CD4-positive, alpha-beta memory T cell (primary cell): ENCODE measurements at regions of chr7 and their contacts with region 1.

Region 1: DNA sequence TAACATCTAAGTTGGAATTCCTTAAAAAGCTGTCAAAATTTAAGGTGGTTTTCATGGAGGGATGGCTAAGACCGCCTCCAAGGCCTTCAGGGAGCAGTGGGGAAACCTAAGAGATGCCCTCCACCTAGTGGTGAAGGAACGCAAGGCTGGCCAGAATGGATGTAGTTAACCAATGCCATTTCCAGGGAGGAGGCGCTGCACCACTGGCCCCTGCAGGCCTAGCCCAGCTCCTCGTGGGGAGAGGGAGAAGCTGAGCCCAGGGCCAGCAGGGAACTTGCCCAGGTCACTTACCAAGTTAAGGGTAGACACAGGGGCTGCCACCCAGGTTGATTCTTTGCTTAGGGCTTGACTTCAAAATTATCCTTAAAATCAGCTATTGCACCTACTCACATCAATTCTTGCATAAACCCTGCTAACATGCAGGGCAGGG is 32.0 kb downstream of the FIGNL1 start:
- DNase-seq: peak; percentile 59 to 71 (median 63)
- H3K4me3 ChIP-seq: no peak overlapping the region
- H3K4me3 Mint-ChIP-seq: no peak overlapping the region
- H3K27ac ChIP-seq: no peak overlapping the region
- H3K27ac Mint-ChIP-seq: peak overlapping the region in 1 of 7 donors; percentile 62
- H3K4me1 ChIP-seq: peaks cover 16% of the 10 kb centered on the region
- H3K4me1 Mint-ChIP-seq: peaks cover 12 to 23% (median 16%) of the 10 kb centered on the region in 4 donors
- H3K27me3 ChIP-seq: no peaks in the 10 kb centered on the region
- H3K27me3 Mint-ChIP-seq: no peaks in the 10 kb centered on the region

Region 2: DNA sequence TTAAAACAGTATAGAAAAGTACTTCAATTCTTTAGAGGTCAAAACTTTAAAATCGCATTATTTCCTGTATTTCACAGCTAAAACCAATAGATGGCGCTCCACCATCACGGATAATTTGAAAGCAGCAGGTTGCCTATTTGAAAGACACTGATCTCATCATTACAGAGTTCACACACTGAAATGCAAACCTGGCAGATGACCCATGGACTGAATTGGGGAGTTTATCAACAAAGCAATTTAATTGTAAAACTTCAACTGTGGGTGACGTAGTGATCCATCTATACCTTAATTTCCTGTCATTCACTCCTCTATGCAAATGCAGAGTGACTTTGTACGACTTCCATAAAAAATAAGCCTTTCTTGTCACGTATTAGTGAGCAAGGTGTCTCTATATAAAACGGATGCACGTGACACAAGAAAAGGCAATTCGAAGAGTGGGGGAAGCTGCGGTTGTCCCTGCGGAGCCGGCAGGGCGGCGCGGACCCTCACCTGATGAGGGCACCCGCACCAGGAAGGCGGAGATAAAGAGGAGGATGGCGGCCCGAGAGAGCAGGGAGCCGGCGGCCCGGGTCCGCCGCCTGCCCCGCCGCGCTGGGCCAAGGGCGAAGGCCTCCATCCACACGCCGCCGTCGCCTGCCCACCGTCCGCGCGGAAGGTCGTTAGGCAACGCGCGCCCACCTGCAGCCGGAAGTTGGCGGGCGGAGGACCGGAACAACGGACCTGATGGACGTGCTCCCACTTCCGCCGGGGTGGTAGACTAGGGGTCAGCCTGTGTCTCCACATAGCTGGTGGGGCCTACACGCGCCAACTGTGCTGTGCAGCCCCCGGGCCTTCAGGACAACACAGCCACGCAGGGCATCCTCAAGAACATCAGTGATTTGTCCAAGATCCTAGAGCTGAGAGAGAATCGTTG is 325.3 kb before region 1 on chr7 and contains the start of gene ZPBP:
- CTCF ChIA-PET with region 1: interaction called, 28 read pairs
- POLR2A ChIA-PET with region 1: interaction called, 6 read pairs
- intact Hi-C with region 1: loop called (anchors 1 kb)
- DNase-seq: peak; percentile 62 to 72 (median 69)
- H3K4me3 ChIP-seq: peak within 1 kb of the TSS; percentile 44 to 66
- H3K4me3 Mint-ChIP-seq: peak within 1 kb of the TSS; percentile 88 to 95 (median 88)
- H3K27ac ChIP-seq: peak within 1 kb of the TSS; percentile 23
- H3K27ac Mint-ChIP-seq: peak within 1 kb of the TSS; percentile 45 to 88 (median 80)
- H3K4me1 ChIP-seq: peaks cover 4% of the 10 kb centered on the region
- H3K4me1 Mint-ChIP-seq: peaks cover 4 to 7% (median 7%) of the 10 kb centered on the region in 4 donors
- H3K27me3 ChIP-seq: no peaks in the 10 kb centered on the region
- H3K27me3 Mint-ChIP-seq: no peaks in the 10 kb centered on the region
- total RNA-seq, gene ZPBP: not detected

Region 3: GRCh38 chr7:50229964-50230363 is 188.1 kb before region 1 on chr7:
- CTCF ChIA-PET with region 1: interaction called, 11 read pairs
- POLR2A ChIA-PET with region 1: interaction called, 4 read pairs
- intact Hi-C with region 1: no loop called
- DNase-seq: no peak
- H3K4me3 ChIP-seq: no peak overlapping the region
- H3K4me3 Mint-ChIP-seq: no peak overlapping the region
- H3K27ac ChIP-seq: no peak overlapping the region
- H3K27ac Mint-ChIP-seq: no peak overlapping the region
- H3K4me1 ChIP-seq: peaks cover 38% of the 10 kb centered on the region
- H3K4me1 Mint-ChIP-seq: peaks cover 31 to 42% (median 36%) of the 10 kb centered on the region in 4 donors
- H3K27me3 ChIP-seq: no peaks in the 10 kb centered on the region
- H3K27me3 Mint-ChIP-seq: no peaks in the 10 kb centered on the region

Region 4: DNA sequence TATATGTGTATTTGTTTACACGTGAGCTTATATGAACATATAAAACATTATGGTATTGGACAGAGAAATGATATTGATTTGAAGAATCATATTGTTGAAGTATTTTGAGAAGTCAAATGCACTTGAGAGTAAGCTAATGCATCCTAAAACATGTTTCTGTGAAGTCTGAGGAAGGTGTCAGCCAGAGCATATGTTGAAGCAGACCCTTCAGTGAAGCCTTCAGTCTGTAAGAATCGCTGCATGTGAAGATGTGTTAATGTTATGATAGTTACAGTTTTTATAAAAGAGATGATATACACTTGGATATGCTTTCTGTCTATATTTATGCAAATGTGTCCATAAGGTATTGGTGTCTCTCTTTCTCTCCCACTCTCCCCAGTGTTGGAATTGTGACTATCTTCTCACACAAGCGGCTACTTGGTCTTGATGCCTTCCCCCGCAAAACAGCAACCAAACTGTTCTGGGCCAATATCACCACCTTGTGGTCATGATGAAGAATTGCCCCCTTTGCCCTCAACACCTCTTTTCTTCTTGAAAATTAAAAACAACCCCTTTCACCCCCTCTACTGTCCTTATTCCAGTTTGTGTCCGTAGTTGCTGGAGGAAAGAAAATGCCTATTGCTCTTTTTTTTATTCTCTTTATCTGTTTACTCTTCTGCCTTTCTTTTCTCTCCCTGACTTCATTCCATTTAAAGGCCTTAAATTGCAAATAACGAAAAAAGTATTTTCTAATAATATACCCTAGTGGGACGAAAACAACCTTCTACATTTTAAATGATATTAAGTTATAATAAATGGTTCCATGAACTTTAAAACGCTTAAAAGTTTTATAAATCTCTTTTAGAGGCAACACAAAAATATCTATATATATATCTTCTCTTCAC is 48.7 kb before region 1 on chr7:
- CTCF ChIA-PET with region 1: interaction called, 66 read pairs
- POLR2A ChIA-PET with region 1: interaction called, 7 read pairs
- intact Hi-C with region 1: loop called (anchors 1 kb)
- DNase-seq: peak; percentile 70 to 81 (median 79)
- H3K4me3 ChIP-seq: no peak overlapping the region
- H3K4me3 Mint-ChIP-seq: peak overlapping the region; percentile 44 to 84 (median 67)
- H3K27ac ChIP-seq: peak overlapping the region; percentile 57
- H3K27ac Mint-ChIP-seq: peak overlapping the region in 6 of 7 donors; percentile 76 to 98 (median 92)
- H3K4me1 ChIP-seq: peaks cover 100% of the 10 kb centered on the region
- H3K4me1 Mint-ChIP-seq: peaks cover 78 to 97% (median 93%) of the 10 kb centered on the region in 4 donors
- H3K27me3 ChIP-seq: no peaks in the 10 kb centered on the region
- H3K27me3 Mint-ChIP-seq: no peaks in the 10 kb centered on the region

Region 5: GRCh38 chr7:50389961-50390360 is 28.1 kb before region 1 on chr7:
- CTCF ChIA-PET with region 1: interaction called, 13 read pairs
- POLR2A ChIA-PET with region 1: interaction called, 5 read pairs
- intact Hi-C with region 1: no loop called
- DNase-seq: no peak
- H3K4me3 ChIP-seq: no peak overlapping the region
- H3K4me3 Mint-ChIP-seq: peak overlapping the region in 3 of 8 donors; percentile 11 to 27 (median 25)
- H3K27ac ChIP-seq: peak overlapping the region; percentile 60
- H3K27ac Mint-ChIP-seq: peak overlapping the region; percentile 61 to 97 (median 88)
- H3K4me1 ChIP-seq: peaks cover 89% of the 10 kb centered on the region
- H3K4me1 Mint-ChIP-seq: peaks cover 68 to 88% (median 76%) of the 10 kb centered on the region in 4 donors
- H3K27me3 ChIP-seq: no peaks in the 10 kb centered on the region
- H3K27me3 Mint-ChIP-seq: no peaks in the 10 kb centered on the region

Region 6: GRCh38 chr7:50404392-50404791 is 13.7 kb before region 1 on chr7:
- CTCF ChIA-PET with region 1: interaction called, 38 read pairs
- POLR2A ChIA-PET with region 1: interaction called, 5 read pairs
- intact Hi-C with region 1: no loop called
- DNase-seq: no peak
- H3K4me3 ChIP-seq: no peak overlapping the region
- H3K4me3 Mint-ChIP-seq: no peak overlapping the region
- H3K27ac ChIP-seq: no peak overlapping the region
- H3K27ac Mint-ChIP-seq: peak overlapping the region in 6 of 7 donors; percentile 5 to 83 (median 44)
- H3K4me1 ChIP-seq: peaks cover 37% of the 10 kb centered on the region
- H3K4me1 Mint-ChIP-seq: peaks cover 37 to 88% (median 57%) of the 10 kb centered on the region in 4 donors
- H3K27me3 ChIP-seq: no peaks in the 10 kb centered on the region
- H3K27me3 Mint-ChIP-seq: no peaks in the 10 kb centered on the region

Region 7: GRCh38 chr7:50455658-50456057 is 37.6 kb after region 1 on chr7:
- CTCF ChIA-PET with region 1: no interaction called
- POLR2A ChIA-PET with region 1: no interaction called
- intact Hi-C with region 1: no loop called
- DNase-seq: no peak
- H3K4me3 ChIP-seq: no peak overlapping the region
- H3K4me3 Mint-ChIP-seq: no peak overlapping the region
- H3K27ac ChIP-seq: no peak overlapping the region
- H3K27ac Mint-ChIP-seq: peak overlapping the region in 2 of 7 donors; percentile 5 to 62
- H3K4me1 ChIP-seq: peaks cover 8% of the 10 kb centered on the region
- H3K4me1 Mint-ChIP-seq: peaks cover 5 to 8% (median 7%) of the 10 kb centered on the region in 4 donors
- H3K27me3 ChIP-seq: no peaks in the 10 kb centered on the region
- H3K27me3 Mint-ChIP-seq: peaks cover 0 to 2% of the 10 kb centered on the region in 2 donors

Region 8: DNA sequence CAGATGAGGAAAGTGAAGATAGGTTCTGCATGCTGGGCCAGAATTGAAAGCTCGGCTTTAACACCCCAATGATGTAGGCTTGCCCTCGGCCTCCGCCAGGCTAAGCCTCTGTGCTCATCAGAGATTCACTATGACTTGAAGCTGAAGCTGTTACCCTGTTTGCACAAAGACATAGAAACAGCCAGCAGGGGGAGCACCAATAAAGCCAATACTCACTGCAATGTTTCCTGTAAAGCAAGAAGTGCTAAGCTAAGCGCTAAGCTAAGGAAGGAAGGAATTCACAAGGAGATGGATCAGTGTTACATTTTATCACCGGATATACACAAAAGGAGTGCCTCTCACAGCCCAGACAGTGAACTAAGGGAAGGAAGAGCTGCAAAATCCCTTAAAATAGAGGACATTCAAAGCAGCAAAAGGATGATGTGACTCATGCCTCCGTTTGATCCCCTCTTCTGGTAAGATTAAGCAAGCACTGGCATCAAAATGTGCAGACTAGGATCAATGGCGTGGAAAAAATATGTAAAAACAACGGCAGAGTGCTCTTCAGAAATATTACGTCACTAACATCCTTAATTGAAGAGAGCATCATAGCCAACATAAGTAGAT is 744.7 kb after region 1 on chr7:
- CTCF ChIA-PET with region 1: interaction called, 3 read pairs
- POLR2A ChIA-PET with region 1: no interaction called
- intact Hi-C with region 1: loop called (anchors 5 kb)
- DNase-seq: peak; percentile 36 to 55 (median 52)
- H3K4me3 ChIP-seq: no peak overlapping the region
- H3K4me3 Mint-ChIP-seq: peak overlapping the region in 1 of 8 donors; percentile 2
- H3K27ac ChIP-seq: no peak overlapping the region
- H3K27ac Mint-ChIP-seq: peak overlapping the region in 1 of 7 donors; percentile 11
- H3K4me1 ChIP-seq: peaks cover 6% of the 10 kb centered on the region
- H3K4me1 Mint-ChIP-seq: peaks cover 0 to 8% (median 1%) of the 10 kb centered on the region in 4 donors
- H3K27me3 ChIP-seq: no peaks in the 10 kb centered on the region
- H3K27me3 Mint-ChIP-seq: peaks cover 14 to 19% of the 10 kb centered on the region in 2 donors

Region 9: GRCh38 chr7:51175316-51175991 is 757.4 kb after region 1 on chr7:
- CTCF ChIA-PET with region 1: no interaction called
- POLR2A ChIA-PET with region 1: no interaction called
- intact Hi-C with region 1: no loop called
- DNase-seq: no peak
- H3K4me3 ChIP-seq: no peak overlapping the region
- H3K4me3 Mint-ChIP-seq: no peak overlapping the region
- H3K27ac ChIP-seq: no peak overlapping the region
- H3K27ac Mint-ChIP-seq: no peak overlapping the region
- H3K4me1 ChIP-seq: no peaks in the 10 kb centered on the region
- H3K4me1 Mint-ChIP-seq: no peaks in the 10 kb centered on the region
- H3K27me3 ChIP-seq: no peaks in the 10 kb centered on the region
- H3K27me3 Mint-ChIP-seq: peaks cover 15% of the 10 kb centered on the region in 2 donors